Activated CD4-positive, alpha-beta T cell treated with anti-CD3 and anti-CD28 coated beads for 36 hours (primary cell): ENCODE measurements at regions of chr19 and their contacts with region 1.

Region 1: DNA sequence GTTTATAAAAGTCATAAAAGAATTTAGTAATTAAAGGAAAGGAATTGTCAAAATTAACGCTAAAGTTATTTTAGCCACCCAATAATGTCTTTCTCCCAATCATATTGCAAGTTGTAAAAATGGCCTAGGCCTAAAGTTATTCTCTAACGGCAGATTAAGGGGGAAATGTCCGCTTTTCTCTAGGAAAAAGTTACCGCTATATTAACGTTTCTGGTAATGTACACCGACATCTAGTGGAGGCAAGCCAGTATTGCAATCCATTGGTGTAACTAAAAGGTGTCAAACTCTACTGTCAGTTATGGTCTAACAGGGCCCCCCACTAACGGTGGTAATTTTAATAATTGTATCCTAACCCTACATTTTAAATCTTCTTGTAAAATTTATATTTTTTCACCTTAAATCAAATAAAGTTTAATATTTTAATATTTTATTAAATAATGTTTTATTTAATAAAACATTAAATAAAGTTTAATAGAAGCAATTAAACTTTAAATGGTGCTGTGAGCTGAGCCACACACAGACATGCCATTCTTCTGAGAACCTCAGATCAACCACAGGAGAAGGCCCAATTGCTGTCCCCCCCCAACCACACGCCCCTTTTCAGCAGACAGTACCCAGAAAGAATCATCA is 35.9 kb upstream of the ZSCAN5A start:
- DNase-seq: peak; percentile 69
- ATAC-seq: peak; percentile 44
- H3K4me3 Mint-ChIP-seq: no peak overlapping the region
- H3K27ac Mint-ChIP-seq: no peak overlapping the region
- H3K4me1 Mint-ChIP-seq: no peaks in the 10 kb centered on the region
- H3K27me3 Mint-ChIP-seq: no peaks in the 10 kb centered on the region

Region 2: GRCh38 chr19:56066152-56067023 is 284.1 kb before region 1 on chr19:
- CTCF ChIA-PET with region 1: interaction called, 11 read pairs
- POLR2A ChIA-PET with region 1: no interaction called
- intact Hi-C with region 1: loop called in 1 of 2 experiments (anchors 1 kb)
- DNase-seq: peak; percentile 75
- ATAC-seq: peak; percentile 69
- H3K4me3 Mint-ChIP-seq: peak overlapping the region; percentile 50
- H3K27ac Mint-ChIP-seq: no peak overlapping the region
- H3K4me1 Mint-ChIP-seq: peaks cover 11% of the 10 kb centered on the region
- H3K27me3 Mint-ChIP-seq: peaks cover 16% of the 10 kb centered on the region

Region 3: DNA sequence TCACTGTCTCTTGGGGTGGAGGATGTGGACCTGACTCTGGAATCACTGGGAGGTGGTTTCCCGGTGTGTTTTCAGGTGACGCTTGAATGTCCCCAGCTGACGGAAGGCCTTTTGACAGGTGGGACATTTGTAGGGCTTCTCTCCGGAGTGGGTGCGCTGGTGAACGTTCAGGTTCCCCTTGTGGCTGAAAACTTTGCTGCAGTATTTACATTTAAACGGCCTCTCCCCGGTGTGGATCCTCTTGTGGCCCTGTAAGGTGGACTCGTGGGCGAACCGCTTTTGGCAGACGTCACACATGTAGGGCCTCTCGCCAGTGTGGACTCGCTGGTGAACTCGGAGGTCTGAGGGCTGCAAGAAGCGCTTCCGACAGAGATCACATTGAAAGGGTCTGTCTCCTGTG is 160.7 kb before region 1 on chr19:
- CTCF ChIA-PET with region 1: no interaction called
- POLR2A ChIA-PET with region 1: no interaction called
- intact Hi-C with region 1: no loop called
- DNase-seq: no peak
- ATAC-seq: no peak
- H3K4me3 Mint-ChIP-seq: no peak overlapping the region
- H3K27ac Mint-ChIP-seq: no peak overlapping the region
- H3K4me1 Mint-ChIP-seq: peaks cover 6% of the 10 kb centered on the region
- H3K27me3 Mint-ChIP-seq: peaks cover 2% of the 10 kb centered on the region

Region 4: DNA sequence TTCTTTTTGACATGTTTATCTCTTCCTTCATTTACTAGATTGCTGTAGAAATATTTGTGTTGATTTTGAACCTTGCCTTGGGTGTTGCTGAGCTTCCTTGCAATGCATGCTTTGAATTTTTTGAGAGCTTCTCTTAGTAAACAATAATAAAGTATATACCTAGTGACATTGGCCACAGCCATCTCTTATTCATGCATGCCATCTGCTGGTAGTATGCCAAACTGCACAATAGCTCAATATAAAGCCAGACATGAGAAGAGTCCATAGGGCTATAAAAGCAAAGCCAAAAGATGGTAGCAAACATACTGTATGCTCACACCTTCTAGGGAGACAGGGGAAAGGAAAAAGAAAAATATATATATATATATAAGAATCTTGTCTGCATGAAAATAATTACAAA is 17.0 kb before region 1 on chr19:
- CTCF ChIA-PET with region 1: interaction called, 18 read pairs
- POLR2A ChIA-PET with region 1: no interaction called
- intact Hi-C with region 1: no loop called
- DNase-seq: peak; percentile 55
- ATAC-seq: no peak
- H3K4me3 Mint-ChIP-seq: no peak overlapping the region
- H3K27ac Mint-ChIP-seq: no peak overlapping the region
- H3K4me1 Mint-ChIP-seq: no peaks in the 10 kb centered on the region
- H3K27me3 Mint-ChIP-seq: no peaks in the 10 kb centered on the region